ENCODE measurements at regions of chr3 and their contacts with region 1.

Region 1: GRCh38 chr3:188914552-188914951 is 257.2 kb upstream of the TPRG1 start:
- DNase-seq: no peak
- H3K4me3 Mint-ChIP-seq: no peak overlapping the region
- H3K27ac Mint-ChIP-seq: peak overlapping the region; percentile 83
- H3K4me1 Mint-ChIP-seq: peaks cover 42% of the 10 kb centered on the region
- H3K27me3 Mint-ChIP-seq: peaks cover 3% of the 10 kb centered on the region

Region 2: DNA sequence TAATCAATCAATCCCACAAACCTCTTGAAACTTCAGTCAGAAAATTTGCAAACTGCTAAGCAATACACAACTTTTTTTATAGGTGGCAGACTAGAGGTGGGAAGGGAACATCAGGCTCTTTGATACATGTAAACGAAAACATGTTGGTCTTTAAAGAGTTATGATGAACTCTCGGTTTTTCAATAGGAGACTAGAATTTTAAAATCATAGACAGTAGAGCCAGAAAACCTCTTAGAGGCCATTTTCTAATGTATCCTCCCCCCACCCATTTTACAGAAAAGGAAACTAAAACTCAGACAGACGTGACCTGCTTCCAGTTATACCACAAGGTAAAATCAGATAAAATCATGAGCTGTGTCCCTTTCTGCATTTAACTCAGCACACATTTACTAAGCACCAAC is 939.7 kb before region 1 on chr3:
- intact Hi-C with region 1: loop called (anchors 5 kb)
- DNase-seq: peak; percentile 20
- H3K4me3 Mint-ChIP-seq: peak overlapping the region; percentile 72
- H3K27ac Mint-ChIP-seq: peak overlapping the region; percentile 93
- H3K4me1 Mint-ChIP-seq: peaks cover 68% of the 10 kb centered on the region
- H3K27me3 Mint-ChIP-seq: no peaks in the 10 kb centered on the region

Region 3: DNA sequence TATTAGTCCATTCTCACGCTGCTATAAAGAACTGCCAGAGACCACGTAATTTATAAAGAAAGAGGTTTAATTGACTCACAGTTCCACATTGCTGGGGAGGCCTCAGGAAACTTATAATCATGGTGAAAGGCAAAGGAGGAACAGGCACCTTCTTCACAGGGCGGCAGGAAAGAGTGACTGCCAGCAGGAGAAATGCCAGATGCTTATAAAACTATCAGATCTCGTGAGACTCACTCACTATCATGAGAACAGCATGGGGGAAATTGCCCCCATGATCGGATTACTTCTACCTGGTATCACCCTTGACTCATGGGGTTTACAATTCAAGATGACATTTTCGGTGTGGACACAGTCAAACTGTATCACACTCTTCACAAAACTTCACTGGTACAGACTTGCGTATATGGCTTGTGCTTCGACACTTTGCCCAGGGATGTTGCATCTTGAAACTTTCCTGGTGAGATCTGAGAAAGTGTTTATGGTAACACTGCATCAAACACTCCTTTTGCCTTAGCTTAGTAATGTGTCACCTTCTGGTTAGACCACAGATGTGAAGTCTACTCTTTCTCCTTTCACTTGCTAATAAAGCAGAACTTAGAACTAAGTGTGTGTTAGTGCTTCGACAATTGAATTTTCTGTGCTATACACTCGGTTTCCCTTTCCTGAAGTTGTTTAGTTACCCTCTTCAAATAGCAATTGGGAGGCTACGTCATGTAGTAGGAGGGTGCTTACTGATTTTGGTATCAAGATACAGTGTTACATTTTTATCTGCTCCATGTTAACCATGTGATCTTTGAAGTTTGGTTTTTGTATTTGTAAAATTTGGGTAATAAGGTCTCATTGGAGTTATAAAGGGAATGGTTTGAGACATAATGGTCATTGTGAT is 574.9 kb before region 1 on chr3:
- intact Hi-C with region 1: loop called (anchors 1 kb)
- DNase-seq: peak; percentile 19
- H3K4me3 Mint-ChIP-seq: peak overlapping the region; percentile 66
- H3K27ac Mint-ChIP-seq: peak overlapping the region; percentile 89
- H3K4me1 Mint-ChIP-seq: peaks cover 29% of the 10 kb centered on the region
- H3K27me3 Mint-ChIP-seq: no peaks in the 10 kb centered on the region

Region 4: GRCh38 chr3:188720636-188721035 is 193.9 kb before region 1 on chr3:
- intact Hi-C with region 1: loop called (anchors 1 kb)
- DNase-seq: no peak
- H3K4me3 Mint-ChIP-seq: no peak overlapping the region
- H3K27ac Mint-ChIP-seq: no peak overlapping the region
- H3K4me1 Mint-ChIP-seq: peaks cover 27% of the 10 kb centered on the region
- H3K27me3 Mint-ChIP-seq: no peaks in the 10 kb centered on the region

Region 5: GRCh38 chr3:189041482-189042090 is 127.0 kb after region 1 on chr3:
- intact Hi-C with region 1: loop called (anchors 1 kb)
- DNase-seq: peak; percentile 76
- H3K4me3 Mint-ChIP-seq: no peak overlapping the region
- H3K27ac Mint-ChIP-seq: peak overlapping the region; percentile 25
- H3K4me1 Mint-ChIP-seq: peaks cover 51% of the 10 kb centered on the region
- H3K27me3 Mint-ChIP-seq: no peaks in the 10 kb centered on the region

Region 6: DNA sequence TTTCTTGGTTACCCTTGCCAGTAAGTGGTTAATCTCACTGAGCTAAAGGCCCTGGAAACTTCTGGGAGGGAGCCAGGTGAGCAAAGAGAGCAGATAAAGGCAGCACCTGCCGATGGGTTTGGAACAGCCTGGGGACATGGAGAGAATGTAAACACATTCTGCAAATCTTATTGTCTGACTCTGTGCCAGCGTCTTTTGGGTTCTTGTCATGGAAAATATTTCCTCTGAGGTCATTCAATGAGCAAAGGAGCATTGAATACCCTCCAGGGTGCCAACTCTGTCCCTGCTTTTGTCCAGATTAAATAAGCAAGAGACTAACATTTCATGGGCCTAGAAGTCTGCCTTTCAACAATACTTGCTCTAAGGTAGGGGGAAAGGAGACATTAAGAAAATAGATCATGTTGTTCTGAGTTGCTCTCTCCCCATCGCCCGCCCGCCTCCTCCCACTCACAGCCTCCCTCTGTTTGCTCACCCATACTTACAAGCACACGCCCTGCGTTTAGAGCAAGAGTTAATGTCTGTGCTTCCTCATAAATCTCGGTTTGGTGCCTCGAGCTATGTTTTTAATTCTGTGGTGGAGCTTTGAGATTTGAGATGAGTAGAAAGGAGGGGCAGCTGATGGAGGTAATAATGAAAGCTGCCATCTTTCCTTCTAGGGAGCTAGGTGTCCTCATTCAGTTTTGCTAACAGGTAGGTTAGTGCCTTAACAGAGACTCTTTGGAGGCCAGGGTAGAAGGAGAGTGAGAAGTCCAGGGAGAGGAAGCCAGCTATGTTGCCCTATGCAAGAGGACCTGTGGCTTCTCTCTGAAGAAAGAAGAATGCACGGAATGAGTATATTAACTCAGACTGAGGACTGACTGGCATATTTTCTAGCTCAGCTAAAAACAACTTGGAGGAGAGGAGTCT is 390.1 kb after region 1 on chr3:
- intact Hi-C with region 1: loop called (anchors 5 kb)
- DNase-seq: no peak
- H3K4me3 Mint-ChIP-seq: peak overlapping the region; percentile 71
- H3K27ac Mint-ChIP-seq: peak overlapping the region; percentile 98
- H3K4me1 Mint-ChIP-seq: peaks cover 75% of the 10 kb centered on the region
- H3K27me3 Mint-ChIP-seq: no peaks in the 10 kb centered on the region

Measured in activated T-helper 2 cell treated with anti-CD3 and anti-CD28 coated beads, Interferon-gamma antibody, Interleukin-2, Interleukin-4, amounts not matched to agents 10 μg/mL and 5 μg/mL and 100 μg/mL, durations not matched to agents 14 hours and 24 hours and 36 hours (primary cell).